ENCODE measurements at regions of chr9 and their contacts with region 1.

Region 1: DNA sequence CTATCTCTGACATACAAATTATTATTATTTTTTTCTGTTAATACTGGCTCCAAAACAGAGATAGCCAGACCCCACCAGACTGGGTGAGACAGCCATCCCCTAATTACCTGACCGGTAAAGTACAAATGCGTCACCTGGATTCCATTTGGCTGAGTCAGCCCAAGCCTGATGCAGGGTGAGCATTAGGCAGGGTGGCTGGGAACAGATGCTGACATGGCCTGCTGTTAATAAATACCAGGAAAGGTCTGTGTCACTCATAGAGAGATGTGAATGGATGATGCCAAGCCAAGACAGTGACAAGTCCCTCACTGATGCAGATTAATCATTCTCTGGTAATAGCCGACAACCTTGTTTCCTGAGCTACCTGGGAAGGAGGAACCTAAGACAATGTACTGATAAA is 183.5 kb downstream of the TRIM32 start:
- DNase-seq: peak; percentile 87 to 98
- H3K4me3 ChIP-seq: no peak overlapping the region
- H3K27ac ChIP-seq: peak overlapping the region; percentile 56
- H3K4me1 ChIP-seq: peaks cover 10% of the 10 kb centered on the region
- H3K27me3 ChIP-seq: no peaks in the 10 kb centered on the region
- CTCF ChIP-seq: no peak

Region 2: GRCh38 chr9:116494815-116495634 is 375.5 kb before region 1 on chr9:
- CTCF ChIA-PET with region 1: no interaction called
- POLR2A ChIA-PET with region 1: no interaction called
- intact Hi-C with region 1: no loop called
- DNase-seq: peak in 1 of 2 experiments; percentile 16
- H3K4me3 ChIP-seq: no peak overlapping the region
- H3K27ac ChIP-seq: no peak overlapping the region
- H3K4me1 ChIP-seq: no peaks in the 10 kb centered on the region
- H3K27me3 ChIP-seq: no peaks in the 10 kb centered on the region
- CTCF ChIP-seq: peak; percentile 79

Region 3: GRCh38 chr9:116910201-116910600 is 39.6 kb after region 1 on chr9:
- CTCF ChIA-PET with region 1: no interaction called
- POLR2A ChIA-PET with region 1: no interaction called
- intact Hi-C with region 1: loop called (anchors 1 kb)
- DNase-seq: no peak
- H3K4me3 ChIP-seq: no peak overlapping the region
- H3K27ac ChIP-seq: no peak overlapping the region
- H3K4me1 ChIP-seq: peaks cover 26% of the 10 kb centered on the region
- H3K27me3 ChIP-seq: no peaks in the 10 kb centered on the region
- CTCF ChIP-seq: no peak

Region 4: GRCh38 chr9:116951588-116952435 is 81.2 kb after region 1 on chr9:
- CTCF ChIA-PET with region 1: no interaction called
- POLR2A ChIA-PET with region 1: no interaction called
- intact Hi-C with region 1: loop called (anchors 1 kb)
- DNase-seq: peak in 1 of 2 experiments; percentile 42
- H3K4me3 ChIP-seq: no peak overlapping the region
- H3K27ac ChIP-seq: no peak overlapping the region
- H3K4me1 ChIP-seq: no peaks in the 10 kb centered on the region; the same call in 1 of the 2 replicates
- H3K27me3 ChIP-seq: no peaks in the 10 kb centered on the region
- CTCF ChIP-seq: no peak

Region 5: GRCh38 chr9:116998305-116998704 is 127.7 kb after region 1 on chr9:
- CTCF ChIA-PET with region 1: no interaction called
- POLR2A ChIA-PET with region 1: no interaction called
- intact Hi-C with region 1: loop called (anchors 10 kb)
- DNase-seq: no peak
- H3K4me3 ChIP-seq: no peak overlapping the region
- H3K27ac ChIP-seq: no peak overlapping the region
- H3K4me1 ChIP-seq: no peaks in the 10 kb centered on the region
- H3K27me3 ChIP-seq: peaks cover 9% of the 10 kb centered on the region
- CTCF ChIP-seq: no peak

Region 6: DNA sequence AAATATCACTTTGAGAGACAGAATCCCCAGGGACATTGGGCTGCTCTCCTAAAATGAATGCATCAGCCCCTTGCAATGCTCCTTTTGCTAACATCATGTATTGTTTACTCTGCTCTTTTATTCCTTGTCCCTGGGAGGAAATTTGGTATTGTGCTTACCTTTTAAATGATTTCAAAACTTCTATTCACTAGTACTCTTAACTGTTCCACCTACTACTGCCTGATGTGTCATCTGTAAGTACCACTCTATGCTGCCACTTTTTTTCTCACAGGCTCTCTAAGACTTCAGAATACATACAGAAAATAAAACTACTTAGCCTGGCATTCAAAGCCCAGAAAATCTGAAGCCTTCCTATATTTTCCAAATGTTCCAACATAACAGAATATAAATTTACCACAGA is 1831.4 kb after region 1 on chr9:
- CTCF ChIA-PET with region 1: interaction called, 11 read pairs
- POLR2A ChIA-PET with region 1: no interaction called
- intact Hi-C with region 1: no loop called
- DNase-seq: no peak
- H3K4me3 ChIP-seq: no peak overlapping the region
- H3K27ac ChIP-seq: no peak overlapping the region
- H3K4me1 ChIP-seq: no peaks in the 10 kb centered on the region
- H3K27me3 ChIP-seq: peaks cover 5% of the 10 kb centered on the region; the same call in 1 of the 2 replicates
- CTCF ChIP-seq: no peak

Measured in PC-9 (cell line).